Activated naive CD4-positive, alpha-beta T cell treated with anti-CD3 and anti-CD28 coated beads for 36 hours (primary cell): ENCODE measurements at regions of chr14 and their contacts with region 1.

Region 1: DNA sequence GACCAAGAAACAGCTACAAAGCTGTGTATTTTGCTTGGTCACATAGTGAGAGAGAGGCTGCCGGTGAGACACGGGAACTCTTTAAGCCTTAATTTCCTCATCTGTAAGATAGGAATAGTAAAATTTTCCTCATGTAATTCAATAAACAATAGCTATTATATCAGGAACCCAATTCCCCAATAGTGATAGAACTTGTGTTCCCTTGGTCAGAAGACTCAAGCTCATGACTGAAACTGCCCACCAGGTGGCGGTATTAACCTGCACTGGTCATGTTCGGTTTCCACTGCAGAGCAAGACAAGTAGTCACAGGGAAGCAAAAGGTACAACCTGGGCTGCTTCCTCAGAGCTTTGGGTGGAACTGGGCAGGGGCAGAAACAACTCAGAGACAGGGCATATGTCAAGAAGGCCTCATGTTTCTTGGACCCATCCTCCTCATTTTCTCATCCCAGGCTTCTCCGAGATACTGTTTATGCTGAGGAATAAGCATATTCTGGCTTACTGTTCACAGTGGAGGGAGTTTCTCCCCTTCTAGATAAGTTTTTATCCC is 4.2 kb upstream of the AJUBA start:
- DNase-seq: peak; percentile 97
- H3K4me3 Mint-ChIP-seq: no peak overlapping the region
- H3K27ac Mint-ChIP-seq: no peak overlapping the region
- H3K4me1 Mint-ChIP-seq: no peaks in the 10 kb centered on the region
- H3K27me3 Mint-ChIP-seq: no peaks in the 10 kb centered on the region

Region 2: DNA sequence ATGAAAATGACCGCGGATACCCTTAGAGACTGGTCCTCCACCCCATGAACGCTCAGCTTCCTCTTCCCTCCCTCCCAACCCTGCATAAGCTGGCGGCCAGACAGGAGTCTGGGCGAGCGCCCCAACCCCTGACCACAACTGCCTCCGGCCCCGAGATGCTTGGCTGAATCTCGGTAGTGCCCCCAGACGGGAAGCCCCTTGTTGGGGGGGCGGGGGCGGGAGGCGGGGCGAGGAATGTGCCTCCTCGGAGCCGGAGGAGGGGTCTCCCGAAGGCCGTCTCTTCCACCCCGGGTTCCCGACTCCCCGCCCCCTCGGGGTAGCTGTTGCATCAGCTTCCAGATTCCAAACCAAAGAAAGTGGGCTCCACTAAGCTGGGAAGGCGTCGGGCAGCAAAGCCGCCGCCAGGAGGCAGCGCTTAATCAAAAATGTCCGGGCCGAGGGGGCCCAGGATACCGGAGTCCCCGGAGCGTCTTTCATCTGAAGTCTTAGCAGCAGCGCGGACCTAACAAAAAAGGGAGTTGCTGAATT is 163.9 kb before region 1 on chr14:
- CTCF ChIA-PET with region 1: interaction called, 5 read pairs
- intact Hi-C with region 1: loop called (anchors 1 kb)
- DNase-seq: peak; percentile 75
- H3K4me3 Mint-ChIP-seq: peak overlapping the region; percentile 61
- H3K27ac Mint-ChIP-seq: no peak overlapping the region
- H3K4me1 Mint-ChIP-seq: peaks cover 31% of the 10 kb centered on the region
- H3K27me3 Mint-ChIP-seq: peaks cover 1% of the 10 kb centered on the region

Region 3: DNA sequence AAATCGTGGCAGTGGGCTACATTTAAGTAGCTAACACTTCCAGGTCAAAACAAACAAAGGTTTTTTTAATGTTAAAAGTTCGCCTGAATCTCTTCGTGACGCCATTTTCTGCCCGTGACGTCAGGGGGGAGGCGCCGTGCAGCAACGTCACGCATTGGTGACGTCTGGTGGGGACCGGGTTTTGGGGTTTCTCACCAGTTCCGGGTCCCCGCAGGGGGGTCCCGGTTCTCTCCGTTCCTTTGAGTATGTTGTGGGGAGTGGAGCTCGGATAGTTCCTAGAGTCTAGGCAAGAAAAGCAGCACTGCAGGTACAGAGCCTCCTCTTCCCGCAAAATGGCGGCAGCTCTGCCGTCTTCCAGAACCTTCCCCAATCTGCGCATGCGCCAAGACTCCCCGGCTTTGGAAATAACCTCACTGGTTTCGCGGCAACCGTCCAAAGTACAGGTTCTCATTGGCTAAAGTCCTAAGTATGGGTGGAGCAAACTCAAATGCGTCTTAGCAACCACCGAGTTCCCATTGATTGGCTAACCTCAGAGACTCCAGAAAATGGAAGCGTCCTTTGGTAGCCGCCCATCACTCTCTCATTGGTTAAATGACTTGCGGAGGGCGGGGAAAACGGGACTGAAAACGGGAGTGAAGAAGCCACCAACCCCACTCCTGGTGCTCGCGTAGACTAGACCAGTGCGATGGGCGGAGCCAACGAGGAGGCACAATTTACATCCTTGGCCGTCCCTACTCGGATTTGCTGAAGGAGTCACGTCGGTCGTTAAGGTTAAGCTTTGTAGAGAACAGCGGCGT is 67.6 kb before region 1 on chr14 and contains the start of gene RBM23:
- CTCF ChIA-PET with region 1: no interaction called
- intact Hi-C with region 1: no loop called
- DNase-seq: peak; percentile 100
- H3K4me3 Mint-ChIP-seq: peak within 1 kb of the TSS; percentile 94
- H3K27ac Mint-ChIP-seq: peak within 1 kb of the TSS; percentile 99
- H3K4me1 Mint-ChIP-seq: peaks cover 42% of the 10 kb centered on the region
- H3K27me3 Mint-ChIP-seq: peaks cover 3% of the 10 kb centered on the region
- total RNA-seq, gene RBM23: 53.5 to 61.2 TPM

Region 4: GRCh38 chr14:22929104-22929847 is 57.3 kb before region 1 on chr14 and contains the start of gene PRMT5:
- CTCF ChIA-PET with region 1: interaction called, 27 read pairs
- intact Hi-C with region 1: loop called (anchors 1 kb)
- DNase-seq: peak; percentile 99
- H3K4me3 Mint-ChIP-seq: no peak within 1 kb of the TSS
- H3K27ac Mint-ChIP-seq: no peak within 1 kb of the TSS
- H3K4me1 Mint-ChIP-seq: peaks cover 34% of the 10 kb centered on the region
- H3K27me3 Mint-ChIP-seq: no peaks in the 10 kb centered on the region
- total RNA-seq, gene PRMT5: 81.0 to 92.8 TPM

Region 5: GRCh38 chr14:22962061-22962676 is 24.4 kb before region 1 on chr14:
- CTCF ChIA-PET with region 1: interaction called, 206 read pairs
- intact Hi-C with region 1: loop called (anchors 1 kb)
- DNase-seq: no peak
- H3K4me3 Mint-ChIP-seq: no peak overlapping the region
- H3K27ac Mint-ChIP-seq: no peak overlapping the region
- H3K4me1 Mint-ChIP-seq: peaks cover 5% of the 10 kb centered on the region
- H3K27me3 Mint-ChIP-seq: no peaks in the 10 kb centered on the region

Region 6: GRCh38 chr14:23006544-23007419 is 20.2 kb after region 1 on chr14:
- CTCF ChIA-PET with region 1: interaction called, 40 read pairs
- intact Hi-C with region 1: loop called (anchors 1 kb)
- DNase-seq: peak; percentile 99
- H3K4me3 Mint-ChIP-seq: peak overlapping the region; percentile 96
- H3K27ac Mint-ChIP-seq: peak overlapping the region; percentile 98
- H3K4me1 Mint-ChIP-seq: peaks cover 36% of the 10 kb centered on the region
- H3K27me3 Mint-ChIP-seq: no peaks in the 10 kb centered on the region

Region 7: GRCh38 chr14:23041729-23042128 is 55.1 kb after region 1 on chr14:
- CTCF ChIA-PET with region 1: interaction called, 713 read pairs
- intact Hi-C with region 1: no loop called
- DNase-seq: no peak
- H3K4me3 Mint-ChIP-seq: no peak overlapping the region
- H3K27ac Mint-ChIP-seq: no peak overlapping the region
- H3K4me1 Mint-ChIP-seq: no peaks in the 10 kb centered on the region
- H3K27me3 Mint-ChIP-seq: no peaks in the 10 kb centered on the region

Region 8: GRCh38 chr14:23076785-23077408 is 90.3 kb after region 1 on chr14:
- CTCF ChIA-PET with region 1: interaction called, 16 read pairs
- intact Hi-C with region 1: no loop called
- DNase-seq: peak; percentile 37
- H3K4me3 Mint-ChIP-seq: no peak overlapping the region
- H3K27ac Mint-ChIP-seq: no peak overlapping the region
- H3K4me1 Mint-ChIP-seq: peaks cover 9% of the 10 kb centered on the region
- H3K27me3 Mint-ChIP-seq: no peaks in the 10 kb centered on the region